Activated naive CD4-positive, alpha-beta T cell treated with anti-CD3 and anti-CD28 coated beads, Interleukin-2, amount 10 ng/mL, durations not matched to agents 7 days and 5 days (primary cell): ENCODE measurements at regions of chr14 and their contacts with region 1.

Region 1: DNA sequence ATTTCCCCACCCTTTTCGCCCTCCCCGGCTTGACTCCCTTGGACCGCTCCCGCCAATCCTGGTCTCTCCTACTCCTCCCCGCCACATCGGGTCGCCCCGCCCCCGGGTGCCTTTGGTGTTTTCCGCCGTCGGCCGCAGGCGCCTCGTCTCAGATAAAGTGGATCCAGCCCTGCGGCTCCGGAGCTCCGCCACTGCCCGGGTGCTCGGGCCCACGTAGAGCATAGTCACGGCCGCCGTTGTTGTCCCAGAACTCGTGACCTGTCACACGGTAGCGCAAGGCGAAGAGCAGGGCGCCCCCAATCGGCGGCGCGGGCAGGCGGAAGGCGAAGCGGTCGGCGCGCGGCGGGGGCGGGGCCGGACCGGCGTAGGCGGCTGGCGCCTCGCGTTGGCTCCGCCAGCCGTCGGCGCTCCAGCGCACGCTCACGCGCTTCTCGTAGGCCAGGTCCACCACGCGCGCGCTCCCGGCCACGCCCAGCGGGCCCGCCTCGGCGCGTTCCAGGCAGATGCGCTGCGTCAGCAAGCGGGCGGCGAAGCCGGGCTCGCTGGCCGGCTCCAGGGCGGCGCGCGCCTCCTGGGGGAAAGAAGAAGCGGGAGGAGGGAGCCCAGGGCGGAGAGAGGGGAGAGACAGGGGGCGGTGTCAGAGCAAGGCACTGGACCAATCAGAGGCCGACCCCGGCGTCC is 1.2 kb downstream of the PPP1R3E start:
- DNase-seq: peak; percentile 97
- H3K4me3 Mint-ChIP-seq: peak overlapping the region; percentile 97
- H3K27ac Mint-ChIP-seq: peak overlapping the region; percentile 100
- H3K4me1 Mint-ChIP-seq: peaks cover 36% of the 10 kb centered on the region
- H3K27me3 Mint-ChIP-seq: peaks cover 26% of the 10 kb centered on the region

Region 2: DNA sequence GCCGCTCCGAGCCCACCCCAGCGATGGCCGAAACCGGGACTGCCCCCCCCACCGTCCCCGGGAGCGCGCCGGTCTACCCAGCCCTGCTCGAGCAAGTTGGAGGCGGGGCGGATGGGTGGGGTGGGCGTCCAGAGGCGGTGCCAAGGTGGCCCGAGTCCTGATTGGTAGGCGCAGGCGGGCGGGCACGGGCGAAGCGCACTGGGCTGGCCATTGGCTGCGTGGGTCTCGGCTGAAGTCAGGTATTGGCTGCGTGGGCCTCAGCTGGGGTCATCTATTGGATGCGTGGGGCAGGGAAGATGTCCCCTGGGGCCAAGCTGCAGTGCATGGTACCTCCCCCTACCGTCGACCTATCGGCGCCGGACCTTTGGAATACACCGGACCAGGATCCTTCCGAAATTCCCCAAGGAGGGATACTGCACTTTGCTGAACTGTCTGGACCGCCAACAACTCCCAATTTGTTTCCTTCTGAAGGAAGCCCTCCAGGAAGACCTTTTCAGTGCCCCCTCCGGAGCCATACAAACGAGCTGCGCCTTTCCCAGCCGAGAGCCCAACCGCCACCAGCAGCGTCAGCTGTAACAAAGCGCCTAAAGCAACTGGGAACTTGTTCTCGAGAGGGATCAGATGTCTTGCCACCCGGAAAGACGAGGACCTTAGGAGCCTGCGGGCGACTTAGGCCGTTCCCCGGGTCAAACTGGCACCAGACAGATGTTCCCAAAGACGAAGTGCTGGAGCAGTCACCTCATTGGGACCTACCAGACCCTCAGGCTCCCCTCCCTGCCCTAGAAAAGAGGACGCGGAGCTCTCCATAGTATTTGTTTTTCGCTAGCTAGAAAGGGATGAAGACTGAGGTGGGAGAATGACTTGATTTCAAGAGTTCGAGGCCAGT is 15.2 kb before region 1 on chr14 and contains the start of gene HOMEZ:
- CTCF ChIA-PET with region 1: interaction called, 16 read pairs
- DNase-seq: peak; percentile 99
- H3K4me3 Mint-ChIP-seq: peak within 1 kb of the TSS; percentile 98
- H3K27ac Mint-ChIP-seq: peak within 1 kb of the TSS; percentile 94
- H3K4me1 Mint-ChIP-seq: peaks cover 30% of the 10 kb centered on the region
- H3K27me3 Mint-ChIP-seq: peaks cover 6% of the 10 kb centered on the region

Region 3: GRCh38 chr14:23320774-23321571 is 19.5 kb after region 1 on chr14 and contains the start of gene PABPN1:
- CTCF ChIA-PET with region 1: interaction called, 32 read pairs
- DNase-seq: peak; percentile 99
- H3K4me3 Mint-ChIP-seq: peak within 1 kb of the TSS; percentile 90
- H3K27ac Mint-ChIP-seq: peak within 1 kb of the TSS; percentile 97
- H3K4me1 Mint-ChIP-seq: peaks cover 29% of the 10 kb centered on the region
- H3K27me3 Mint-ChIP-seq: peaks cover 8% of the 10 kb centered on the region